Mammary epithelial cell (primary cell): ENCODE measurements at regions of chr10 and their contacts with region 1.

Region 1: GRCh38 chr10:131825150-131825848 is 75.5 kb upstream of the PPP2R2D start:
- DNase-seq: no peak
- H3K4me3 ChIP-seq: no peak overlapping the region
- H3K27ac ChIP-seq: no peak overlapping the region
- H3K4me1 ChIP-seq: no peaks in the 10 kb centered on the region
- H3K27me3 ChIP-seq: no peaks in the 10 kb centered on the region
- CTCF ChIP-seq: no peak

Region 2: DNA sequence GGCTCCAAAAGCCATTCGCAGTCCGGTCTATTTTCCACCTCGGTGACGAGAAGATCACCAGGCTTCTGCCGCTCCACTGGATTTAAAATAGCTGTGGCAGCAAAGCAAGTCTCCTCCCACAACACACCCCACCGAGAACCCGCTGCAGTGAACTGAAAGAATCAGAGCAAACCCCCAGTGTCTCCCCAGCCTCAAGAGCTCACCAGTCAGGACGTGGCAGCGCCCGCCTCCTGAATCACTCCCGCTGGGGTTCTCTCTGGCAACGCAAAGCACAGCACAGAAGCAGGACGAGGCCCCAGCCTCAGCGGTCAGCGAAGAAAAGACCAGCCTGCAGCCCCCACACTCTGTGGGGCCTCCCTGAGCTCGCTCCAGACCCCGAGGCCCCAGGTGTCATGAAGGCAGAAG is 50.6 kb before region 1 on chr10:
- CTCF ChIA-PET with region 1: no interaction called
- dilution Hi-C with region 1: loop called (anchors 5 kb)
- in situ Hi-C with region 1: no loop called
- intact Hi-C with region 1: no loop called
- DNase-seq: no peak
- H3K4me3 ChIP-seq: no peak overlapping the region
- H3K27ac ChIP-seq: no peak overlapping the region
- H3K4me1 ChIP-seq: no peaks in the 10 kb centered on the region
- H3K27me3 ChIP-seq: no peaks in the 10 kb centered on the region
- CTCF ChIP-seq: no peak